ENCODE measurements at regions of chr20 and their contacts with region 1.

Region 1: DNA sequence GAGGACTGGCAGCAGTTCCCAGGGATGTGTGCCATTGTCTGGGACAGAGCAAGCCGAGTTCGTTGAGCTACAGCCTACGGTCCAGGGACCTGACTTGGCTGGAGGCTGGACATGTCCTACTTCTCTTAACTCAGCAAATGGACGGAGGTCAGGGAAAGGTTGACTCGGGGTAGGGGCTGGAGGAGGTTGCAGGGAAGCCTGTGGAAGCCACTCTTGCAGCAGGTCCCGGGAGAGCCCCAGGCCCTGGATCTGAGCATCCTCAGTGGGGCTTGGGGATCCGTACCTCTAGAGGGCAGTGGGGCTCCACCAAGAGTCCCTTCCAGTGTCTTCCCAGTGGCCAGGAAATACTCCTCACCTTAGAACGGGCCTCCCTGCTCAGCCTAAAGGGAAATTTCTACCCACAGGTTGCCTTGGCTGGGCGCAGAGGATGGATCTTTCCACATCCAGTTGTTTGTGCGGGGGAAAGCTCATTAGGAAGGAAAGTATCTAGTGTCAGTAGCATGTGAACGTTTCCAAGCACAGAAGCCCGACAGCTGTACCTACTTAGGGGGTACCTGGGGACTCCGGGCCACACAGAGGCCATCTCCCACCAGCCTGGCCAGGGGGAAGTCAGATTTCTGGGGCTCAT is 170.2 kb downstream of the NFATC2 start:
- DNase-seq: peak; percentile 79
- ATAC-seq: peak; percentile 94
- H3K4me3 Mint-ChIP-seq: no peak overlapping the region
- H3K27ac Mint-ChIP-seq: no peak overlapping the region
- H3K4me1 Mint-ChIP-seq: no peaks in the 10 kb centered on the region
- H3K27me3 Mint-ChIP-seq: no peaks in the 10 kb centered on the region

Region 2: GRCh38 chr20:51624157-51624731 is 252.0 kb after region 1 on chr20:
- CTCF ChIA-PET with region 1: interaction called, 8 read pairs
- POLR2A ChIA-PET with region 1: no interaction called
- intact Hi-C with region 1: loop called (anchors 1 kb)
- DNase-seq: peak; percentile 85
- ATAC-seq: peak; percentile 57
- H3K4me3 Mint-ChIP-seq: no peak overlapping the region
- H3K27ac Mint-ChIP-seq: no peak overlapping the region
- H3K4me1 Mint-ChIP-seq: peaks cover 19% of the 10 kb centered on the region
- H3K27me3 Mint-ChIP-seq: peaks cover 3% of the 10 kb centered on the region

Region 3: GRCh38 chr20:51687062-51687461 is 314.8 kb after region 1 on chr20:
- CTCF ChIA-PET with region 1: no interaction called
- POLR2A ChIA-PET with region 1: no interaction called
- intact Hi-C with region 1: no loop called
- DNase-seq: no peak
- ATAC-seq: no peak
- H3K4me3 Mint-ChIP-seq: no peak overlapping the region
- H3K27ac Mint-ChIP-seq: no peak overlapping the region
- H3K4me1 Mint-ChIP-seq: no peaks in the 10 kb centered on the region
- H3K27me3 Mint-ChIP-seq: no peaks in the 10 kb centered on the region

Region 4: DNA sequence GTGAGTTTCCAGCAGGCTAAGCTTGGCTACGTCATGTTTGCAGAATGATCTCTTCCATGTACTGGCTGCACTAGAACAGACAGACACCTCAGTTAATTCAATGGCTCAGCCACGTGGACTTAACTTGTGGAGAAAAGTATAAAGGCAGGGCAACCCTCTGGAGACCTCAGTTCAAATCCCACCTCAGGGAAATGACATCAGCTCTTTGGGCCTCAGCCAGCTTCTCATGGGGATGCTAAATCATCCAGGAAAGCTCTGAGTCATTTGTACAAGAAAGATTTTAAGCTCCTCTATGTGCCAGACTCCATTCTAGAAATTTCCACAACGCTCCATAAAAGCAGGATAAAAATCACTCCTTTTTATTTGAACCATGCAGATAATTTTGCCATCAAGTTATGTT is 558.5 kb after region 1 on chr20:
- CTCF ChIA-PET with region 1: no interaction called
- POLR2A ChIA-PET with region 1: no interaction called
- intact Hi-C with region 1: no loop called
- DNase-seq: no peak
- ATAC-seq: no peak
- H3K4me3 Mint-ChIP-seq: no peak overlapping the region
- H3K27ac Mint-ChIP-seq: no peak overlapping the region
- H3K4me1 Mint-ChIP-seq: no peaks in the 10 kb centered on the region
- H3K27me3 Mint-ChIP-seq: no peaks in the 10 kb centered on the region